ENCODE measurements at regions of chr9 and their contacts with region 1.

Region 1: DNA sequence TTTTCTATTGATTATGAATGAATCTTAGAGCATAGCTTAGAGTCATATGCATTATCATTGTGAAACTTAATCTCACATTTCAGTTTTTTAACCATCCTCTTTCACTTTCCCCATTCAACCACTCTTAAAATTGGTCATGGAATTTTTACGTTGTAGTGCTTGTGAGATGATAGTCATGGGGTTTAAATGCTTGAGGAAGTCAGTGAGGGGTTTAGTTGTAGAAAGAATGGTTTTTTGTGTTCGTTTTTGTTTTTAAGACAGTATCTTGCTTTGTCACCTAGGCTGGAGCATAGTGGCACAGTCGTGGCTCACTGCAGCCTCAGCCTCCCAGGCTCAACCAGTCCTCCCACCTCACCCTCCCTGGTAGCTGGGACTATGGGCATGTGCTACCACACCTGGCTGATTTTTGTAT is 19.6 kb downstream of the UGCG start:
- DNase-seq: no peak
- H3K4me3 Mint-ChIP-seq: no peak overlapping the region
- H3K27ac Mint-ChIP-seq: no peak overlapping the region
- H3K4me1 Mint-ChIP-seq: peaks cover 16% of the 10 kb centered on the region
- H3K27me3 Mint-ChIP-seq: no peaks in the 10 kb centered on the region
- CTCF ChIP-seq: no peak

Region 2: DNA sequence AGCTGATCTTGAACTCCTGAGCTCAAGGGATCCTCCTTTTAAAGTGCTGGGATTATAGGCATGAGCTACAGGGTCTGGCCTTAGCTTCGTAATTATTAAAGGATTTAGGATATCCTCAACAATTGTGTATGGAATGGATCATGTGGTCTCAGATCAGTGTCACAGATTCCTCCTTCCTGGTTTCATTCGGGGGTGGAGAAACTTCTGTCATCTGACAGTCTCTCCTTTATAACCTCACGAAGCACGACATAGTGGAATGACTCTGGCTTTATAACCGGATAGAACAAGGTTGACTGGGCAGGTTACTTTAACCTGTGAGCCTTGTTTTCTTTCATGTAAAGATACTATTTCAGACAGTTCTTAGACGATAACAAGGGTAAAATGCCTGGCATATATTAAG is 259.2 kb before region 1 on chr9:
- CTCF ChIA-PET with region 1: no interaction called
- POLR2A ChIA-PET with region 1: no interaction called
- intact Hi-C with region 1: no loop called
- DNase-seq: no peak
- H3K4me3 Mint-ChIP-seq: no peak overlapping the region
- H3K27ac Mint-ChIP-seq: no peak overlapping the region
- H3K4me1 Mint-ChIP-seq: peaks cover 2% of the 10 kb centered on the region
- H3K27me3 Mint-ChIP-seq: no peaks in the 10 kb centered on the region
- CTCF ChIP-seq: no peak

Region 3: DNA sequence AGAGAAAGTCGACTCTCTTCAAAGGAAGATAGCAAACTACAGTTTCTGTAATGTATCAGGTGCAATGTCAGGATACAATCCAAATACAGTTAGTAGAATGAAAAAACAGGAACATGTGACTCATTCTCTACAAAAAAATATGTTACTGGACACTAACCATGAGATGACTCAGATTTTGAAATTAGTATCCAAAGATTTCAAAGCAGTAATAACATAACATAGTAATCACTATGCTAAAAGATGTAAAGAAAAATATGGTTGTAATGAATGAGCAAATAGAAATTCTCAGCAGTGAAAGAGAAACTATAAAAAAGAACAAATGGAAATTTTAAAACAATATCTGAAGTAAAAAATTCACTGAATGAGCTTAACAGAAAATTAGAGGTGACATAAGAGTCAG is 163.8 kb before region 1 on chr9:
- CTCF ChIA-PET with region 1: no interaction called
- POLR2A ChIA-PET with region 1: no interaction called
- intact Hi-C with region 1: no loop called
- DNase-seq: peak; percentile 42
- H3K4me3 Mint-ChIP-seq: no peak overlapping the region
- H3K27ac Mint-ChIP-seq: peak overlapping the region; percentile 61
- H3K4me1 Mint-ChIP-seq: peaks cover 6% of the 10 kb centered on the region
- H3K27me3 Mint-ChIP-seq: no peaks in the 10 kb centered on the region
- CTCF ChIP-seq: no peak

Region 4: DNA sequence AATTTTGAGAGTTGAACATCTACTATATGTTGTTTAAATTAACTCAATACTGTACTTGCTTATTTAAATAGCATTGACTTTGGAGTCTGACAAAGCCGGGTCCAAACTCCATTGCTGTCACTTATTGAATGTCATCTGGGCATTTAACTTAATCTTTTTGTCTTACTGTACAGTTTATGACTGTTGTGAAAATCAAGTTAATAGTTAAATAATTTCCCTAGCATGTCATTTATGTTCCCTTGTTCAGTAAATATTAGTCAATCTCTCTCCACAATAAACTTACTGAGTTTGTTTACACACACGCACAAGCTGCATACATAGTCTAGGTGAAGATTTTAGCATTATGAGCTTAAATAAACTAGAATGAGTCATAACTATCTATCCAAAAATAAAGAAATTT is 25.9 kb before region 1 on chr9:
- CTCF ChIA-PET with region 1: no interaction called
- POLR2A ChIA-PET with region 1: no interaction called
- intact Hi-C with region 1: no loop called
- DNase-seq: no peak
- H3K4me3 Mint-ChIP-seq: no peak overlapping the region
- H3K27ac Mint-ChIP-seq: no peak overlapping the region
- H3K4me1 Mint-ChIP-seq: no peaks in the 10 kb centered on the region
- H3K27me3 Mint-ChIP-seq: no peaks in the 10 kb centered on the region
- CTCF ChIP-seq: no peak

Region 5: DNA sequence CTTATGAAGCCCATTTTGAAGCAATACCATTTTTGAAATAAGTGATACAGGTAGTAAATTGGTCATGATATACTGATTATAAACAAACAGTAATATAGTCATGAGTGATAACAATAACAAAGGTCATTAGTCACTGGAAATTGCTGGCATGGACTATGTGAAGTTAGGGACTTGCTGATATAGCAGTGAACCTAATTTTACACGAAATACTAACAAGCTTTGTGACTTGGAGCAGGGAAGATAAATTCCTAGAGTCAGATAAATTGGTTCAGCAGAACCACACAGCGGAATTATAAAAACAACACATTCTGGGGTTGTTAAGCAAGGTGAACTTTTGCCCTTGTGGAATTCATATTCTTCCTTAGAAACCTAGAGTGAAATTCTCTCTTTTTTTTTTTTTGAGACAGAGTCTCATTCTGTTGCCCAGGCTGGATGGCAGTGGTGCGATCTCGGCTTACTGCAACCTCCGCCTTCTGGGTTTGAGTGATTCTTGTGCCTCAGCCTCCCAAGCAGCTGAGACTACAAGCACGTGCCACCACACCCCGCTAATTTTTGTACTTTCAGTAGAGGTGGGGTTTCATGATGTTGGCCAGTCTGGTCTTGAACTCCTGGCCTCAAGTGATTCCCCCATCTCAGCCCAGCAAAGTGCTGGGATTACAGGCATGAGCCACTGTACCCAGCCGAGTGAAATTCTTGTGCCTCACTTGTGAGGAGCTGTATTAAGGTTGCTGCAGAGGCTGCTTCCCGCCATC is 13.7 kb before region 1 on chr9:
- CTCF ChIA-PET with region 1: no interaction called
- POLR2A ChIA-PET with region 1: interaction called, 24 read pairs
- intact Hi-C with region 1: no loop called
- DNase-seq: no peak
- H3K4me3 Mint-ChIP-seq: no peak overlapping the region
- H3K27ac Mint-ChIP-seq: no peak overlapping the region
- H3K4me1 Mint-ChIP-seq: peaks cover 32% of the 10 kb centered on the region
- H3K27me3 Mint-ChIP-seq: no peaks in the 10 kb centered on the region
- CTCF ChIP-seq: no peak

Region 6: GRCh38 chr9:111992523-111992922 is 76.3 kb after region 1 on chr9:
- CTCF ChIA-PET with region 1: no interaction called
- POLR2A ChIA-PET with region 1: no interaction called
- intact Hi-C with region 1: no loop called
- DNase-seq: peak; percentile 78
- H3K4me3 Mint-ChIP-seq: no peak overlapping the region
- H3K27ac Mint-ChIP-seq: peak overlapping the region; percentile 73
- H3K4me1 Mint-ChIP-seq: peaks cover 17% of the 10 kb centered on the region
- H3K27me3 Mint-ChIP-seq: no peaks in the 10 kb centered on the region
- CTCF ChIP-seq: no peak